Ovary (tissue), 10 donors: ENCODE measurements at regions of chr12 and their contacts with region 1.

Region 1: GRCh38 chr12:15534870-15535269 is 212.6 kb downstream of the PTPRO start:
- DNase-seq: no peak
- H3K4me3 ChIP-seq: no peak overlapping the region
- H3K27ac ChIP-seq: no peak overlapping the region
- H3K4me1 ChIP-seq: no peaks in the 10 kb centered on the region
- H3K27me3 ChIP-seq: no peaks in the 10 kb centered on the region
- CTCF ChIP-seq: no peak
- EP300 ChIP-seq: no peak
- POLR2A ChIP-seq: no peak

Region 2: DNA sequence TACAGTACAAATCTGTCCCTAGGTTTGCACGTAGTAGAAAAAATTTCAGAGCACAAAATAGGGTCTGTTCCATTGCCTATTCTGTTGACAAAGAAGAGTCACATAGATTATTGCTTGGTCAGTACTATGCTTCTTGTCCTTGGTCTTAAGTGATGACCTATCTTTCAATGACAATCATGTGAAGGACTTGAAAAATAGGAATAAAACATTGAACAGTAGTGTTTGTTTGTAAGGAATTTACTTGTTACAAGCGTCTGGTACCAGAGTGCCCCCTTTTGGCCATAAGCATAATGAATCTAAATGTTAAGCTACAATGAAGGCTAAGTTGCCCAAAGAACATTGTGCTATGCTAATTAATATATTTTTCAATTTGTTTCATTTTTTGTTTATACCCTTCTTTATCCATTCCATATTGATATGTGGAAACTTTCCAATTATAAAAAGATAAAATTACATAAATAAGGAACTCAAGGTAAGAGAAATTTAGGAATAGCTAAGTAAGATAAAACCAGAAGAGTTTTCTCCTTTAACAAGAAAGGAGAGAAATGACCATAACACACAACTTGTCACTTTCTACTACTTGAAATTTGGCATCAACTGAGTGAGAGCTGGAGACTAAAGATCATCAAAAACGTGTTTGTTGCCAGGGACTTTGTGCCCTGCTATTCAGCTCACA is 49.6 kb after region 1 on chr12:
- intact Hi-C with region 1: loop called in 1 of 4 experiments (anchors 5 kb)
- DNase-seq: peak in 1 of 5 donors; percentile 36
- H3K4me3 ChIP-seq: no peak overlapping the region
- H3K27ac ChIP-seq: no peak overlapping the region
- H3K4me1 ChIP-seq: no peaks in the 10 kb centered on the region
- H3K27me3 ChIP-seq: no peaks in the 10 kb centered on the region
- CTCF ChIP-seq: peak; percentile 15 to 58 (median 44)
- EP300 ChIP-seq: no peak
- POLR2A ChIP-seq: no peak